Activated CD8-positive, alpha-beta T cell treated with anti-CD3 and anti-CD28 coated beads, Interleukin-2, amount 10 ng/mL, durations not matched to agents 7 days and 5 days (primary cell): ENCODE measurements at regions of chr3 and their contacts with region 1.

Region 1: GRCh38 chr3:140941434-140942220 is at the start of gene SLC25A36:
- DNase-seq: peak; percentile 98
- ATAC-seq: peak; percentile 99
- H3K4me3 Mint-ChIP-seq: peak within 1 kb of the TSS; percentile 93
- H3K27ac Mint-ChIP-seq: peak within 1 kb of the TSS; percentile 97
- H3K4me1 Mint-ChIP-seq: peaks cover 32% of the 10 kb centered on the region
- H3K27me3 Mint-ChIP-seq: peaks cover under 1% of the 10 kb centered on the region
- total RNA-seq, gene SLC25A36: 39.6 to 46.0 TPM

Region 2: DNA sequence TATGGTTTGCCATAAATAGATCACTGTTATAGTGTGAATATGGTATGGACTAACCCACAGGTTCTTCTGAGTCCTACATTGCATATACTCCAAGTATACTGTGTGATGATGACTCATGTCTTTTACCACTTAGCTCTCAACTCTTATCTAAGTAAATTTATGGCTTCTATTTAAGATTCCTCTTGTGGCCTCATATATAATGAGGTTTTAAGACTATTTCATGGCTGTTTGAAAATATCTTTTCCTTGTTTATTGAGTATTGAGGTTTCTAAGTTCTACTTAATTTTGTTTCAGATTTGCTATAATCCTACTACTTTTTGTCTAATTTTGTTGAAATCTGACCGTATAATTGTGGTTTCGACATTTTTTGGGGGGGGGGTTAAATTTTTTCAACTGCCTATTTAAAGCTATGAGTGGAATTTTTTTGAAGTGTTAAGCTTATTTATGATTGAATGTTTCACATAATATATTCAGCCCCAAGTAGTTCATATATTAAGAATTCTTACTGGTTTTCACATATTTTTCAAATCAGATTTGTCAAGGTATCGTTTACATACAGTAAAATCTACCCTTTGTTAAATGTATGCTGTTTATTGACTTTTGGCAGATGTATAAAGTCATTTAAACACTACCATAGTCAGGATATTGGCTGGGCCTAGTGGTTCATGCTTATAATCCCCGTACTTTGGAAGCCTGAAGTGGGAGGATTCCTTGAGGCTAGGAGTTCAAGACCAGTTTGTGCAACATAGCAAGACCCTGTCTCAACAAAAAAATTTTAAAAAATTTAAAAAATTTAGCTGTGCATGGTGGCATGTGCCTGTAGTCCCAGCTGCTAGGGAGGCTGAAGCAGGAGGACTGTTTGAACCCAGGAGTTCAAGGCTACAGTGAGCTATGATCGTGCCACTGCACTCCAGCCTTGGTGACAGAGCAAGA is 11.7 kb after region 1 on chr3:
- CTCF ChIA-PET with region 1: interaction called, 10 read pairs
- POLR2A ChIA-PET with region 1: no interaction called
- DNase-seq: no peak
- ATAC-seq: no peak
- H3K4me3 Mint-ChIP-seq: no peak overlapping the region
- H3K27ac Mint-ChIP-seq: no peak overlapping the region
- H3K4me1 Mint-ChIP-seq: peaks cover 6% of the 10 kb centered on the region
- H3K27me3 Mint-ChIP-seq: no peaks in the 10 kb centered on the region

Region 3: DNA sequence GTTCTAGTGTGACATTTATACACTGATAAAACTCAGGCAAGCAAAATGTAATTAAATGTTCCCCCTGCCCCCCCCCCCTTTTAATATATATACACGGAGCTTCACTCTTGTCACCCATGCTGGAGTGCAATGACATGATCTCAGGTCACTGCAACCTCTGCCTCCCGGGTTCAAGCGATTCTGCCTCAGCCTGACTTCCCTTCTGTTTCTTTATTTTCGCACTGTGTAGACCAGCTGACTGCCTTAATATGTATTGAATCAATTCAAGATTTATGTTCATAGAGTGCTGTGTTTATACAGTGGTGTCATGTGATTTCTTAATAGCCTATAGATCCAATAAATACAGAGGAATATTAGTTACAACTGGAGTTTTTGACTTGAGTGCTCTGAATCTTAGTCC is 39.0 kb after region 1 on chr3:
- CTCF ChIA-PET with region 1: no interaction called
- POLR2A ChIA-PET with region 1: no interaction called
- DNase-seq: no peak
- ATAC-seq: no peak
- H3K4me3 Mint-ChIP-seq: no peak overlapping the region
- H3K27ac Mint-ChIP-seq: no peak overlapping the region
- H3K4me1 Mint-ChIP-seq: no peaks in the 10 kb centered on the region
- H3K27me3 Mint-ChIP-seq: no peaks in the 10 kb centered on the region